Activated naive CD4-positive, alpha-beta T cell treated with anti-CD3 and anti-CD28 coated beads, Interleukin-2, amount 10 ng/mL, durations not matched to agents 7 days and 5 days (primary cell): ENCODE measurements at regions of chr15 and their contacts with region 1.

Region 1: GRCh38 chr15:45030743-45031142 is 7.7 kb downstream of the SORD start:
- DNase-seq: no peak
- H3K4me3 Mint-ChIP-seq: no peak overlapping the region
- H3K27ac Mint-ChIP-seq: no peak overlapping the region
- H3K4me1 Mint-ChIP-seq: peaks cover 6% of the 10 kb centered on the region
- H3K27me3 Mint-ChIP-seq: no peaks in the 10 kb centered on the region

Region 2: DNA sequence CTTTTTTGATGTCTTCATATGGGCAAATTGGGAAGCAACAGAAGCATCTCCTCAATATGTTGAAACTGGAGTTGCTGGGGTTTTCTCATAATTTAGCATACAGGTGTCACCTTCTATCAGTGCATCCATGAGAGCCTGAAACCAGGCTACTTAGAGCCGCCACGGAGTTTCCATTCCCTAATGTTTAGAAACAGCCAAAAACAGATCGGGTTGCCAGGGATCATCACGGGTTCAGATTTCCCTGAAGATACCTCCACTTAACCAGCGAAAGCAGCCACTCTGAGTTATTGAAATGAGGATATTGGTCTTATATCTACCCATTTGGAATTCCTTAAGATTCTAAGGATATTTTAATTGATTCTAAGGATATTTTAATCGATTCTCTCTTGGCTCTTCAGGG is 59.7 kb before region 1 on chr15:
- CTCF ChIA-PET with region 1: interaction called, 22 read pairs
- DNase-seq: no peak
- H3K4me3 Mint-ChIP-seq: no peak overlapping the region
- H3K27ac Mint-ChIP-seq: no peak overlapping the region
- H3K4me1 Mint-ChIP-seq: no peaks in the 10 kb centered on the region
- H3K27me3 Mint-ChIP-seq: peaks cover 13% of the 10 kb centered on the region

Region 3: DNA sequence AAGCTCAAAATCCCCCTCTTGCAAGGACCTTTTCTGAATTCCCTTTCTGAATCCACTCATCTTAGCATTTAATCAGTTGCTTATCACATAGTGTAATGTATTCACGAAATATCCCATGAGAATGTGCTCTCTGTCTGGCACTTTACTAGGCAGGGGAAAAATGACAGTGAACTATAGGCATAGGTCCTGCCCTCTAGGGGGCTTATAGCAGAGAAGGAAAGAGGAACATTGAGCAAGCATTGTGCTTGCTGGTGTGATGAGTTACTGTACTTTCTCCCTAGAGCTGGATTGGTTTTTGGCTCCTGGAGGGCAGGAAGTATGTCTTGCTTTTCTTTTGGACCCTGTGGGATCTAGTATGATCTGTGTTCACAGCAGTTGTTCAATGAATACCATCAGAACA is 56.8 kb after region 1 on chr15:
- CTCF ChIA-PET with region 1: no interaction called
- DNase-seq: no peak
- H3K4me3 Mint-ChIP-seq: no peak overlapping the region
- H3K27ac Mint-ChIP-seq: no peak overlapping the region
- H3K4me1 Mint-ChIP-seq: no peaks in the 10 kb centered on the region
- H3K27me3 Mint-ChIP-seq: peaks cover 33% of the 10 kb centered on the region

Region 4: GRCh38 chr15:45146405-45146804 is 115.7 kb after region 1 on chr15:
- CTCF ChIA-PET with region 1: no interaction called
- DNase-seq: no peak
- H3K4me3 Mint-ChIP-seq: no peak overlapping the region
- H3K27ac Mint-ChIP-seq: no peak overlapping the region
- H3K4me1 Mint-ChIP-seq: no peaks in the 10 kb centered on the region
- H3K27me3 Mint-ChIP-seq: peaks cover 10% of the 10 kb centered on the region